Right ventricle myocardium inferior (tissue), 1 donor: ENCODE measurements at regions of chr16 and their contacts with region 1.

Region 1: DNA sequence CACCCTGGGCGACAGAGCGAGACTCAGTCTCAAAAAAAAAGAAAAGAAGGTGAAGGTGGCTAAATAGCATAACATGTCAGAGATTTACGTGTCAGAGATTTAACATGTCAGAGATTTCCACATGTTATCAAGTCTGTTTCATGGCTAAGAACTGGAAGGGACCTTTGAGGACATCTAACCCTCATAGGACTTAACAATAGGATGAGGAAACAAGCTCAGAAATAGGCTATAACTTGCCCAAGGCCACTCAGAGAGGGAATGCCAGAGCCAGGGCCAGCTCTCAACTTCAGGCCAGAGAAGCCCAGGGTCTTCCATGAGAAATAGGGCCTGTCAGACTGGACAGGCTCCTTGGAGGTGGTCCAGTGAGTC is 26.8 kb upstream of the ZNF629 start:
- DNase-seq: no peak
- ATAC-seq: no peak

Region 2: DNA sequence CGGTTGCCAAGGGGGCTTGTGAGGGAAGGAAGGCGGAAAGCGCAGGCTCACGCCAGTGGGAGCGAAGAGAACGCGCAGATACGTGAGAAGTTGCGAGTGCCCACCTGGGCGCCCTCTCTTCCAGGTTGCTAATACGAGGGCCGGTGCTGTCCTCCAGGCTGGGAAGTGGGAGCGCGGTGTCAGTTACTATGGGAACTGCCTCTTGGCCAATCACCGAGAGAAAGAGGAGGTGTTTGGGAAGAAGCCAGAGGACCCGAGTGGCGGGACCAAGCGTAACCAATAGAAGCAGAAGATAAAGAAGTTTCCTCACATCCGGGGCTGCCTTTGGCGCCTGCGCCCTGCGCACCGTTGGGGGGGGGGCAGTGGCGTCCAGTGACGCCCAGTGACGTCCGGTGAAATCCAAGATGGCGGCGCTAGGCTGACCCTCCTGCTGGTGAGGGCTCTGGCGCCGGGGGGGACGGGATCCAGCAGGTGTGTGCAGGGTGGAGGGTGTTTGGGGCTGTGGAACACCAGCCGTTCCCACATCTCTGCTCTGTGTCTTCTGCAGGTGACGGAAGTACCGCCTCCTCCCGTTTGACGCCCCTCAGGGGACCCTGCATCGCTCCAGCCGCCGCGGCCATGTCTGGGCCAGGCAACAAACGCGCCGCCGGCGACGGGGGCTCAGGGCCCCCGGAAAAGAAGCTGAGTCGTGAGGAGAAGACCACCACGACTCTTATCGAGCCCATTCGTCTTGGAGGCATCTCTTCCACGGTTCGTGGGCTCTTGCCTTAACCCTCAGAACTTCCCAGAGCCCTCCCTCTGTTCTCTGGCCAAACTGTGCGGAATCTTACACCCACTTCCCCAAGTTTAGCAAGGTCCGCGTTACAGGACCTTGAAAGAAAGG is 51.6 kb before region 1 on chr16 and contains the starts of genes CFAP119 and RNF40:
- intact Hi-C with region 1: loop called (anchors 2 kb)
- DNase-seq: peak; percentile 96
- ATAC-seq: peak; percentile 96
- total RNA-seq, gene CFAP119: 0.89 TPM
- total RNA-seq, gene RNF40: 42.6 TPM

Region 3: GRCh38 chr16:30775392-30776188 is 38.2 kb before region 1 on chr16:
- intact Hi-C with region 1: loop called (anchors 5 kb)
- DNase-seq: peak; percentile 89
- ATAC-seq: peak; percentile 85

Region 4: GRCh38 chr16:30874821-30875717 is 61.3 kb after region 1 on chr16:
- intact Hi-C with region 1: loop called (anchors 5 kb)
- DNase-seq: peak; percentile 97
- ATAC-seq: peak; percentile 99